ENCODE measurements at regions of chr22 and their contacts with region 1.

Region 1: GRCh38 chr22:38862375-38863329 is 9.4 kb downstream of the CBX6 start:
- DNase-seq: no peak
- H3K4me3 ChIP-seq: no peak overlapping the region
- H3K27me3 ChIP-seq: 0 out of 2 replicates have a peak, but pooled peaks cover 2% of the 10 kb centered on the region
- CTCF ChIP-seq: no peak

Region 2: GRCh38 chr22:38850941-38851849 is 11.5 kb before region 1 on chr22:
- CTCF ChIA-PET with region 1: interaction called, 103 read pairs
- POLR2A ChIA-PET with region 1: no interaction called
- DNase-seq: no peak
- H3K4me3 ChIP-seq: no peak overlapping the region
- H3K27me3 ChIP-seq: peaks cover 5% of the 10 kb centered on the region; the same call in 1 of the 2 replicates
- CTCF ChIP-seq: no peak

Measured in BJ (cell line).